ENCODE measurements at regions of chr7 and their contacts with region 1.

Region 1: GRCh38 chr7:150716368-150716767 is at the start of gene GIMAP1:
- DNase-seq: peak; percentile 39 to 85 (median 68)
- ATAC-seq: peak; percentile 81 to 91
- H3K4me3 Mint-ChIP-seq: peak within 1 kb of the TSS; percentile 92 to 100 (median 97)
- H3K27ac Mint-ChIP-seq: peak within 1 kb of the TSS; percentile 89 to 99 (median 98)
- H3K4me1 Mint-ChIP-seq: peaks cover 40 to 69% (median 66%) of the 10 kb centered on the region in 4 donors
- H3K27me3 Mint-ChIP-seq: no peaks in the 10 kb centered on the region
- polyA plus RNA-seq, gene GIMAP1: 48.0 to 87.4 (median 67.1) TPM

Region 2: GRCh38 chr7:150626696-150627095 is 89.7 kb before region 1 on chr7:
- POLR2A ChIA-PET with region 1: interaction called, 165 read pairs
- DNase-seq: no peak
- ATAC-seq: no peak
- H3K4me3 Mint-ChIP-seq: peak overlapping the region; percentile 12 to 72 (median 56)
- H3K27ac Mint-ChIP-seq: peak overlapping the region; percentile 71 to 97 (median 85)
- H3K4me1 Mint-ChIP-seq: peaks cover 32 to 83% (median 76%) of the 10 kb centered on the region in 4 donors
- H3K27me3 Mint-ChIP-seq: no peaks in the 10 kb centered on the region

Region 3: GRCh38 chr7:150668472-150668911 is 47.9 kb before region 1 on chr7:
- POLR2A ChIA-PET with region 1: interaction called, 122 read pairs
- DNase-seq: peak in 9 of 10 donors; percentile 41 to 86 (median 71)
- ATAC-seq: peak; percentile 79 to 92
- H3K4me3 Mint-ChIP-seq: peak overlapping the region; percentile 60 to 85 (median 78)
- H3K27ac Mint-ChIP-seq: peak overlapping the region; percentile 94 to 100 (median 98)
- H3K4me1 Mint-ChIP-seq: peaks cover 34 to 93% (median 89%) of the 10 kb centered on the region in 4 donors
- H3K27me3 Mint-ChIP-seq: no peaks in the 10 kb centered on the region

Region 4: GRCh38 chr7:150685219-150686029 is 30.9 kb before region 1 on chr7 and contains the start of gene GIMAP2:
- POLR2A ChIA-PET with region 1: interaction called, 273 read pairs
- DNase-seq: peak in 5 of 10 donors; percentile 7 to 68 (median 58)
- ATAC-seq: peak; percentile 71 to 89
- H3K4me3 Mint-ChIP-seq: peak within 1 kb of the TSS; percentile 94 to 100 (median 97)
- H3K27ac Mint-ChIP-seq: peak within 1 kb of the TSS; percentile 95 to 100 (median 98)
- H3K4me1 Mint-ChIP-seq: peaks cover 46 to 93% (median 80%) of the 10 kb centered on the region in 4 donors
- H3K27me3 Mint-ChIP-seq: no peaks in the 10 kb centered on the region
- polyA plus RNA-seq, gene GIMAP2: 89.3 to 102 (median 93.8) TPM

Region 5: DNA sequence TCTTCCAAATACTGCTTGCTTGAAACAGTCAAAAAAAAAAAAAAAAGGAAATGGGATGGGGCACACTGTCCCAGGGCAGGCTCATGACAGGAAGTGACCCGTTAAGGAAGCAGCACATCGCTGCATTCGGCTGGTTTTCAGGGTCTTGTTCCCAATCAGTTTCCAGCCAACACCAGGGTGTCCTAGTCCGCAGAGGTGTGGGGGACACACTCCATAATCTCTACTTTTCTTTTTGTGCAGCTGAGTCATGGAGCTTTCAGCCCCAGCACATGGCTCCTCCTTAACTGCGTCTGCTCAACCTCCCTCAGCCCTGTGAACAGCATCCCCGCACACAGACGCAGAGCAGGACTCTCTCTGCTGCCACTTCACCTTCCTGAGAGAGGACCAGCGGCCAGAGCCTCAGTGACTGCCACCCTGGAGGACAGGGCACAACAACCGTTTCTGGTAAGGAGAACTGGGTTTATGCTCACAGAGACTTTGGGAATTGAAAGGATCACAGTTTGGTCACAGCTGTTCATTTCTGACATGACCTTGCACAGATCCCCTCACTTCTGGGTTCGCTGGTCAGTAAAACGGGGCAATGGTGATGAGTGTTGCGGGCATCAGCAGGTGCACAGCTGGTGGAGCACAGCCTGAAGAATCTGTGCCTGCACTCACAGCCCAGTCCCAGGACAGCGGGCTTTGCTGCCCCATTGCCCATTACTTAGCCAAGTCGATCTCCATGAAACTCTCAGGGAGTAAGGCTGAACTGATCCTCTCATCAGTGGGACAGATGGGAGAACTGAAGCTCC is 21.1 kb after region 1 on chr7 and contains the start of gene GIMAP5:
- POLR2A ChIA-PET with region 1: interaction called, 323 read pairs
- DNase-seq: peak in 6 of 10 donors; percentile 27 to 60 (median 40)
- ATAC-seq: peak; percentile 67 to 76
- H3K4me3 Mint-ChIP-seq: peak within 1 kb of the TSS; percentile 88 to 100 (median 98)
- H3K27ac Mint-ChIP-seq: peak within 1 kb of the TSS; percentile 93 to 100 (median 96)
- H3K4me1 Mint-ChIP-seq: peaks cover 48 to 75% (median 68%) of the 10 kb centered on the region in 4 donors
- H3K27me3 Mint-ChIP-seq: no peaks in the 10 kb centered on the region
- polyA plus RNA-seq, gene GIMAP5: 320 to 506 (median 401) TPM

Region 6: DNA sequence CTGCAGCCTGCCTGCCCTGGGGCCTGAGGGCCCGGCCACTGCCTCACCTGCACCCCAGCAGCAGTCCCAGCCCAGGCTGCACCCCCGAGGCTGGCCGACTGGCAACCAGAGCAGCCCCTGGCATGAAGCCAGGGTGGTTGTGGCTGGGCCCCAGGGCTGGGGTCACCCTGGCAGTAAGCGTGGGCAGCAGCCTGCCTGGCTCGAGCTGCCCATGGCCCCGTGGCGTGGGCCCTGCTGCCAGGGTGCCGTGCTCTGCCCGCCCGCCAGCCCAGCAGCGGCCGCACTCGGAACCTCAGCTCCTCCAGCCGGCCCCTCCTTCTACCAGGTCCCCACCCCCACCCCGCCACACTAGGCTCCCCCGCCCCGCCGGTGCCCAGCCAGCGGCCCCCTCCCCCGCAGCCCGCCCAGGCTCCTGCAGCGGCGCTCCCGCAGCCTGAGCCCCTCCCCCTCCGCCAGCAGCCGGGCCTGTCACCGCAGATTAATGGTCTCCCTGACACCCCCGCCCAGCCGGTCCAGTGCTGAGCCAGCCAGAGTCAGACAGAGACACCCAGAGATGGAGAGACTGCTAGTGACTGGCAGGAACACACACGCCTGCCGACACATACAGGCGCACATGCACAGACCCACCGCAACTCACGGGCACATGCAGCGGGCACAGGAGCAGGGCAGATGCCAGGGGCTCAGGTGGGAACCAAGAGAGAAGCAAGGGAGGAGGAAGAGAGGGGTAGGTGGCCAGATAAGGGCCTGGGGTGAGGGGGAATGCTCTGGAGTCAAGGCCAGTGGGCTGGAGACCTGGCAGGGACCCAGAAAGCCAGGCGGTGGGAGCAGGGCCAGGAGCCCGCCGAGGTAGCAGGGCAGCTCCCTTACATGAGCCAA is 239.4 kb after region 1 on chr7:
- POLR2A ChIA-PET with region 1: no interaction called
- DNase-seq: no peak
- ATAC-seq: no peak
- H3K4me3 Mint-ChIP-seq: no peak overlapping the region
- H3K27ac Mint-ChIP-seq: no peak overlapping the region
- H3K4me1 Mint-ChIP-seq: peaks cover 10 to 25% (median 13%) of the 10 kb centered on the region in 4 donors
- H3K27me3 Mint-ChIP-seq: peaks cover 18 to 59% (median 38%) of the 10 kb centered on the region in 5 donors

Measured in naive thymus-derived CD8-positive, alpha-beta T cell (primary cell).